ENCODE measurements at regions of chr11 and their contacts with region 1.

Region 1: DNA sequence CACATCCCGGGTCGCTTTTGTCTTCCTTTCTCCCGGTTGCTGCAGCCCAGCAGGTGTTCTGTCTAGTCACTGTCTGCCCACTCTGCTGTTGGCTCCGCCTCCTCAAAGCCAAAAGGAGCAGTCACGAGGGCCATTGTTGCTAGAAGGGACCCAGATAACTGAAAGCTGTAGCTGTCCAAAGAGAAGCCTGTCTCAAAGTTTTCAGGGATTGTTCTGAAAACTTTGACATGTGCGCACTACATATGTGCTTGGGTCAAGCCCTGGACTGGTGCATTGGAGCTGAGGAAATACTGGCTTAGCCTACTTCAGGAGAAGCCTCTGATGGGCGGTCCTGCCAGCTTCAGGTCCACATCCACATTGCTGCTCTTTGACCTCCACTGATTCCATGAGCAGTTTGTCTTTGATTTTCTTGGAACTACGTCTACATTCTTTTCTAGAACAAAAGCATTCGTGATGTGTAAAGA is 8.8 kb upstream of the OR2AT4 start:
- DNase-seq: no peak
- ATAC-seq: no peak

Region 2: DNA sequence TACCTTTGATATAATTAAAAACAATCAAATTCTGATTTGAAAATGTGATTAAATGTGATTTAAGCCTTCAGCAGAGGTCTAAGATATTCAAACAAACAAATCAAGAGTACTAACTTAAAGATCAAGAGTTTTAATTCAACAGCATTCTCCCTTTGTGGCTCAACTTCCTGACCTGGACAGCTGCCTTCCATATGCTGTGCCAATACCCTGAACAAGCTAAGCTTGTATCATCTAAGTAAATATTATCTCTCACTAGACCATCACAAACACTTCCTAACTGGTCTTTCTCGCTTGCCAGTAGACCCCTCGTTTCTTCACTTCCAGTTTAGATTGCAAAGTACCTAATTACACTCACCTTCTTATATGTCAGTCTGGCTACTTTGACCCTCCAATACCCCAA is 758.1 kb before region 1 on chr11:
- intact Hi-C with region 1: loop called (anchors 5 kb)
- DNase-seq: no peak
- ATAC-seq: no peak